ENCODE measurements at regions of chr9 and their contacts with region 1.

Region 1: DNA sequence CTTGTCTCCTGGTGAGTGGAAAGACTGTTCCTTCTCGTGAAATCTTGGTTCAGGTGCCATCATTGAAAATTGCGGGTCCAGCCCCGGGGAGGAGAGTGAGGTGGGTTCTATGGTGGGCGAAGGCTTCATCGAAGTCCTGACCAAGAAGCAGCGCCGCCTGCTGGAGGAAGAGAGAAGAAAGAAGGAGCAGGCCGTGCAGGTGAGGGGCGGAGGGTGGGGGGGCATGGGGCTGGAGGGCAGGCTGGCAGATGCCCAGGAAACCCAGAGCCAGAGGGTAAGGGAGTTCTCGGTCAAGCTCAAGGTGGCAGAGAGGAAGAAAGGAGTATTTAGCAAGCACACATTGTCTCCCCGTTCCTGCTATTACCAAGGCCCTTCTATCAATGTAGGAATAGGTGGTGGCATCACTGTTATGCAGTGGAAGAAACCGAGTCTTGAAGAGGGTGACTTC is 24.3 kb upstream of the POMT1 start:
- DNase-seq: peak in 1 of 2 donors; percentile 68
- ATAC-seq: peak; percentile 30

Region 2: DNA sequence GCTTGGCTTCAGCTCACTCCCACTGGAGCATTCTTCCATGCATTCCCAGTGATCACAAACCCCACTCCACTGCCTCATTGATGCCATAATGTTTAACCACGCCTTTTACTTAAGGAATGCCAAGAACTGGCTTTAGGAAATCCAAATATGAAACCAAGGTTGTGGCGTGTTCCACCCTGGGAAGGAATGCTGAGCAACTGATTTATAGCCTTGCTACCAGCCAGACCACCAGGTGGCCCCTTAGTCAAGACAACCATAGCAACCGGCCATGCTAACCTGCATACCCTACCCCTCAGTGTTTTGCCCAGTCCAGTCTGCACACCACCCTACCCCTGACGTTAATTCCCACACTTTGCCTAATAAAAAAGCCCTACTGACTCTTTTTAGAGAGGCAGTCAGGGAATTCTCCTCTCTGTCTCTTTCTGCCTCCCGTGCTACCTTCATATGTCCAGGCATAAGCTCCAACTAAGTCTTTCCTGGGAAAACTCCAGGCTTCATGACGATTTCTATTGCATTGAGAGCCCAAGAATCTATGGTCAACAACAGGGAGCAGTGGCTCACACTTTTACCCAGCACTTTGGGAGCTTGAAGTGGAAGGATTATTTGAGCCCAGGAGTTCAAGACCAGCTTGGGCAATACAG is 111.6 kb before region 1 on chr9:
- intact Hi-C with region 1: loop called in 1 of 2 experiments (anchors 10 kb)
- DNase-seq: no peak
- ATAC-seq: peak; percentile 68

Measured in left colon (tissue), 2 donors.